ENCODE measurements at regions of chr3 and their contacts with region 1.

Region 1: GRCh38 chr3:11201246-11202024 is 47.1 kb downstream of the HRH1 start:
- DNase-seq: no peak
- ATAC-seq: peak; percentile 34

Region 2: GRCh38 chr3:11155341-11156025 is 46.0 kb before region 1 on chr3:
- intact Hi-C with region 1: loop called (anchors 5 kb)
- DNase-seq: peak; percentile 80
- ATAC-seq: peak; percentile 89

Measured in Right ventricle myocardium superior (tissue), 1 donor.